ENCODE measurements at regions of chr21 and their contacts with region 1.

Region 1: GRCh38 chr21:26170471-26171257 is at the start of gene APP:
- DNase-seq: peak; percentile 87 to 96 (median 95)
- ATAC-seq: peak; percentile 90 to 91
- H3K4me3 ChIP-seq: peak within 1 kb of the TSS; percentile 62
- H3K27ac ChIP-seq: peak within 1 kb of the TSS; percentile 33
- H3K4me1 ChIP-seq: peaks cover 2% of the 10 kb centered on the region
- H3K27me3 ChIP-seq: no peaks in the 10 kb centered on the region
- total RNA-seq, gene APP: 433 to 535 (median 472) TPM

Region 2: DNA sequence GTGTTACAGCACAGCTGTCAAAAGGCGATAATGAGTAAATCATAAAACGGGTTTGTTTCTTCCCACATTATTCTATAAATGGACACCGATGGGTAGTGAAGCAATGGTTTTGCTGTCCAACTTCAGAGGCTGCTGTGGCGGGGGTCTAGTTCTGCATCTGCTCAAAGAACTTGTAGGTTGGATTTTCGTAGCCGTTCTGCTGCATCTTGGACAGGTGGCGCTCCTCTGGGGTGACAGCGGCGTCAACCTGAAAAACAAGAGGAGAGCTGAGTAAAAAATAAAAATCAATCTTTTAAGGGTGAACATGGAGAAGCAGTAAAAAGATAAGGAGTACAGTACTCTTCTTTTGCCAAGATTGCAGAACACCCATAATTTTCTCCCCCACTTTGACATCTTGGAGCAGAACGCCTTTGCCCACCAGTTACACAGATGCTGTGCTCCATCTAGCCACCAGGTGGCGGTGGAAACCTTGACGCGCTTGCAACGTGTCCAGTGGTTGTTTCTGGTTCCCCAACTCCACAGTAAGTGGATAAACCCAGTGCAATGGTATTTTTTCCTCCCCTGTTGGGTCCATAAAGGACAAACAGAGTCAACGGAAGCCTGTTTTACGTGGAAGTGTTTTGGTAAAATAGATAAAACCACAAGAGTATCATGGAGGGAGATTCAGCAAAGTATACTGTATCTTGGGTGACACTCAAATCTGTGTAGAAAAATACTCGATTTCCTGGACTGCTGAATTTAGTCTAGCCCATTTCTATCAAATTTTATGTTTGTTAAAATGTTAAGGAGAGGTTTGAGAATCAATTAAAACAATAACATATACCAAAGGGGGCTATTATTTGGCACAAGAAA is 288.9 kb before region 1 on chr21:
- intact Hi-C with region 1: loop called in 2 of 4 experiments (anchors 5 kb)
- DNase-seq: peak; percentile 65 to 85 (median 80)
- ATAC-seq: peak; percentile 71 to 76
- H3K4me3 ChIP-seq: no peak overlapping the region
- H3K27ac ChIP-seq: no peak overlapping the region
- H3K4me1 ChIP-seq: peaks cover 5% of the 10 kb centered on the region
- H3K27me3 ChIP-seq: no peaks in the 10 kb centered on the region

Region 3: DNA sequence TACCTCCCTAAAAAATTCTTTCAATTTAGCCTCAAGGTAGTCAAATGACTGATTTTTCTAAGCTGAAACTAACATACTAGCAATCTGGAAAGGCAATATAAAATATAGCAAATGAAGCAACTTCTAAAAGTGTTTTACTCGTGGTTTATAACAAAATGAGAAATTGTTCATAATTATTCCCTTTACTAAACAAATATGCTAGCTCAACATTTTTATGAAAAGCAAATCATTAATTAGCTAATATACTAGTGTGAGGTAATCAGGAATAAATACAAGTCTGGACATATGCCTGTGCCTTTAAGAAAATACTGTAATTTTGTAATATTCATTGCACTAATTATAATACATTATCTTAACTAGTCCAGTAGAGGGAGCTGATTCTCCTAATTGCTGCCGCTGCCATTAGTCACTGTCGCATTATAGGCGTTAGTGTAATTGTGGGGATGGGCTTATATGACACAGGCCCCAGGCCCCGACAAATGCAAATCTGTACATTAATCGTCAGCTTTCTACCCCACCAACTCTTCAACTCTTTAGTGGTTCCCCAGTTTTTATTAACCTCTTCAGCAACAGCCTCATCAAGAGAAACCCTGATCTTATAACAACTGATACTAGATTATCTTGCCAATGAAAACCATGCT is 275.0 kb before region 1 on chr21:
- intact Hi-C with region 1: loop called in 3 of 4 experiments (anchors 2 to 10 kb)
- DNase-seq: no peak
- ATAC-seq: peak; percentile 75 to 76
- H3K4me3 ChIP-seq: no peak overlapping the region
- H3K27ac ChIP-seq: no peak overlapping the region
- H3K4me1 ChIP-seq: peaks cover 3% of the 10 kb centered on the region
- H3K27me3 ChIP-seq: no peaks in the 10 kb centered on the region

Region 4: DNA sequence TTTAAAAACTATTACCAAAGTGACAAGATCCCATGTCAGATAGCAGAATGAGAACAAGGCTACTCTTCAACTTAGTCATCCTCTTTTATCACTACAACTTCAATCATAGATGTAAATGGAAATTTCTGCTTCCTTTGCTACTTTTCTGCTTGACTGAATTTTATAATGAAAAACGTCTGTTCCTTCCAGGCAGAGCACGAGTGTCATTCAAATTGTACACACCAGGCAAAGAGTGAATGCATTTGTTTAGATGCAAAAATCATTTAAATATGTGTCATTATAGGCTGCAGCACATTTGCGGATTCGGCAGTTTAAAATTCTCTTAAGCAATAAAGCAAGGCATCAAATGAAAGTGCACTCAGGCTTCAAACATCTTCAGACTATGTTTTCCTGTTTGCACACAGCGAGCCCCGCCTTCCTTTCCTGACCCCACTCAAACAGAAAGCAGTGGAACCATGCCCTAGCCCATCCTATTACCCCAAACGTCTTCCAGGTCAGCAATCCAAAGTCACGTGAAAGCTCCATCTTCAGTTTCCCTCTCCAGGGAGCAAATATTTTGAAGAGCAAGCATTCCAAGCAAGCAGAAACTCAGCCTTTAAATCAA is 99.7 kb before region 1 on chr21:
- intact Hi-C with region 1: loop called in 1 of 4 experiments (anchors 10 kb)
- DNase-seq: peak in 1 of 3 donors; percentile 45
- ATAC-seq: peak; percentile 41 to 69
- H3K4me3 ChIP-seq: peak overlapping the region; percentile 10
- H3K27ac ChIP-seq: no peak overlapping the region
- H3K4me1 ChIP-seq: peaks cover 5% of the 10 kb centered on the region
- H3K27me3 ChIP-seq: no peaks in the 10 kb centered on the region

Region 5: DNA sequence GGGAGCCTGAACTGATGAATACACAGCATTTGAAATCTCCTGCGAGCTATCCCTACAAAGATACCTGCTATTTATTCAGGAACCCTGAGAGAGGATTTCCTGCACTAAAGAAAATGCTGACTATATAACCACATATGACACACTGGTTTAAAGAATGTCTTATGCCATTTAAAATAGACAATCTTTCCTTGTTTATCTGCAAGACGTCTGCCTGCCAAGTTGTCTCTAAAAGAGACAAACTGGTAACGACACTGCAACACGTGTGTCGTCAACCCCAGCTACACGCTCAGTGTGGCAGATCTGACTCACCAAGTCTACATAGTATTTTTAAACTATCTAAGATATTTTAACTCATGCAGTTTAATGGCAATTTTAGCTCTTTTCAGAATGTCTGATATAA is 42.7 kb before region 1 on chr21:
- intact Hi-C with region 1: loop called in 1 of 4 experiments (anchors 5 kb)
- DNase-seq: peak in 2 of 3 donors; percentile 29 to 59
- ATAC-seq: peak; percentile 58 to 81
- H3K4me3 ChIP-seq: peak overlapping the region; percentile 1
- H3K27ac ChIP-seq: no peak overlapping the region
- H3K4me1 ChIP-seq: peaks cover 8% of the 10 kb centered on the region
- H3K27me3 ChIP-seq: no peaks in the 10 kb centered on the region

Measured in right cardiac atrium (tissue), 5 donors.